Ovary (tissue), 10 donors: ENCODE measurements at regions of chr16 and their contacts with region 1.

Region 1: DNA sequence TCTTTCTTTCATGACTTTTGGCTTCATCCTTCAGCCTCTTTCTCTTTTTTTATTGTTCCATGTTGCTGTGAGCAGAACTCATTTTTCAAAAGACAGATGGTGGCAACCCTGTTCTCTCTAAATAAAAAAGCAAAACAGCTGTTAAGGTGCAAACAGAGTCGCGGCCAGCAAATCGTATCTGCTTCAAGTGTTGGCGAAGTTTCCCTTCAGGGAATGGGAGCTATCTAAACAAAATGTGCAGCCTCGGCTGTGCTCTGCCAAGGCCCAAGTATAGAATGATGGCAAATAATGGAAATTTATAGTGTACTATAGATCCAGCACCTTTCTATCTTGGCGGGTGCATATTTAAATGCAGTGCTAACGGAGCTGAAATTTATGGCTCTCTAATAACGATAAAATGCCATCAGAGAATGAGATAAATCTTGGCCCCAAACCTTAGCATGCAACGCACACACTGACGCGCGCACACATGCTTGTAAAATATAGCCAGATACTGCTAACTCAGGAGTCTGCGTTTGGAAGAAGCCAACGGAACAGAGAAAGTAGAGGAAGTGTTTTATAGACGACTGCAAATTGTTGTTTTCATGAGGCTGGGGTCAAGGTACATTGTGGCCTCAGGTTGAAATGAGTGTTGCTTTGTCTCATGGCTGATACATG is 315.5 kb upstream of the RBFOX1 start:
- DNase-seq: no peak
- H3K4me3 ChIP-seq: no peak overlapping the region
- H3K27ac ChIP-seq: no peak overlapping the region
- H3K4me1 ChIP-seq: no peaks in the 10 kb centered on the region
- H3K27me3 ChIP-seq: no peaks in the 10 kb centered on the region
- CTCF ChIP-seq: no peak
- EP300 ChIP-seq: no peak
- POLR2A ChIP-seq: no peak

Region 2: GRCh38 chr16:6913566-6913965 is 103.6 kb before region 1 on chr16:
- intact Hi-C with region 1: no loop called
- DNase-seq: no peak
- H3K4me3 ChIP-seq: no peak overlapping the region
- H3K27ac ChIP-seq: no peak overlapping the region
- H3K4me1 ChIP-seq: no peaks in the 10 kb centered on the region
- H3K27me3 ChIP-seq: no peaks in the 10 kb centered on the region
- CTCF ChIP-seq: no peak
- EP300 ChIP-seq: no peak
- POLR2A ChIP-seq: no peak

Region 3: GRCh38 chr16:7116734-7117133 is 99.6 kb after region 1 on chr16:
- intact Hi-C with region 1: loop called in 1 of 4 experiments (anchors 5 kb)
- DNase-seq: no peak
- H3K4me3 ChIP-seq: no peak overlapping the region
- H3K27ac ChIP-seq: no peak overlapping the region
- H3K4me1 ChIP-seq: no peaks in the 10 kb centered on the region
- H3K27me3 ChIP-seq: no peaks in the 10 kb centered on the region
- CTCF ChIP-seq: no peak
- EP300 ChIP-seq: no peak
- POLR2A ChIP-seq: no peak